PC-9 (cell line): ENCODE measurements at regions of chr1 and their contacts with region 1.

Region 1: DNA sequence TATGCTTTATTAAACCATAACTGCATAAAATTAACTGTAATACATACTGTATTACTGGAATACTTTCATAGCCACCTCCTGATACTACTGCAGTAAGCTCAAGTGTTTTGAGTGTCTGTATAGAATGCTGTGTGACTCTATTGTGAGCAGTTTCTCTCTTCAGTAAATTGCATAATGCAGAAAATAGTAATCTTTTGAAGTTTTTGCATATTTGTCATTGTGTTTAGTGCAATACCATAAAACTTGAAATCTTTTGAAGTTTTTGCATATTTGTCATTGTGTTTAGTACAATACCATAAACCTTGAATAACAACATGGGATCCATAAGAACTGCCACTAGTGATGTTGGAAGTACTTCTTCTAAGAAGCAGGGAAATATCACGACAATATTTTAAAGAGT is 11.2 kb downstream of the TPR start:
- DNase-seq: no peak
- H3K4me3 ChIP-seq: no peak overlapping the region
- H3K27ac ChIP-seq: no peak overlapping the region
- H3K4me1 ChIP-seq: no peaks in the 10 kb centered on the region
- H3K27me3 ChIP-seq: no peaks in the 10 kb centered on the region
- CTCF ChIP-seq: no peak

Region 2: GRCh38 chr1:186202271-186202764 is 161.6 kb before region 1 on chr1:
- CTCF ChIA-PET with region 1: no interaction called
- POLR2A ChIA-PET with region 1: no interaction called
- intact Hi-C with region 1: no loop called
- DNase-seq: no peak
- H3K4me3 ChIP-seq: no peak overlapping the region
- H3K27ac ChIP-seq: no peak overlapping the region
- H3K4me1 ChIP-seq: no peaks in the 10 kb centered on the region
- H3K27me3 ChIP-seq: no peaks in the 10 kb centered on the region
- CTCF ChIP-seq: no peak

Region 3: DNA sequence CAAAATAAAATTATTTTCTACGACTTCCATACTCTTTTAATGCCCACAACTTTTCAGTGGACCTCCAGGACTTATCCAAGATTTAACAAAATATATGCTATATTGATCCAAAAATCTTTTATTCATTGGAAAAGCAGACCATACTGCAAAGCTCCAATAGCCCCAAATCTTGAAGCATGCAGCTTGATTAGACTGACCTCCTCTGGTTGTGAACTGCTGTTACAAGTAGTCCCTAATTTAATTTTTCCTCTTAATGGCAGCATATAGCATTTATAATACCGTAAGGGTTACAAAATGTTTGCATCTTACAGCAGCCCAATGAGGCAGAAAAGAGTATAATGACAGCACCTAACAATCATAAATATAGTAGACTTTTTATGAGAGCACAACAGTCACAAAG is 38.7 kb before region 1 on chr1:
- CTCF ChIA-PET with region 1: no interaction called
- POLR2A ChIA-PET with region 1: no interaction called
- intact Hi-C with region 1: loop called (anchors 5 kb)
- DNase-seq: no peak
- H3K4me3 ChIP-seq: no peak overlapping the region
- H3K27ac ChIP-seq: no peak overlapping the region
- H3K4me1 ChIP-seq: no peaks in the 10 kb centered on the region
- H3K27me3 ChIP-seq: no peaks in the 10 kb centered on the region
- CTCF ChIP-seq: peak; percentile 61